Activated CD4-positive, alpha-beta memory T cell treated with anti-CD3 and anti-CD28 coated beads, Interleukin-2, amount 10 ng/mL, durations not matched to agents 7 days and 5 days (primary cell): ENCODE measurements at regions of chr10 and their contacts with region 1.

Region 1: DNA sequence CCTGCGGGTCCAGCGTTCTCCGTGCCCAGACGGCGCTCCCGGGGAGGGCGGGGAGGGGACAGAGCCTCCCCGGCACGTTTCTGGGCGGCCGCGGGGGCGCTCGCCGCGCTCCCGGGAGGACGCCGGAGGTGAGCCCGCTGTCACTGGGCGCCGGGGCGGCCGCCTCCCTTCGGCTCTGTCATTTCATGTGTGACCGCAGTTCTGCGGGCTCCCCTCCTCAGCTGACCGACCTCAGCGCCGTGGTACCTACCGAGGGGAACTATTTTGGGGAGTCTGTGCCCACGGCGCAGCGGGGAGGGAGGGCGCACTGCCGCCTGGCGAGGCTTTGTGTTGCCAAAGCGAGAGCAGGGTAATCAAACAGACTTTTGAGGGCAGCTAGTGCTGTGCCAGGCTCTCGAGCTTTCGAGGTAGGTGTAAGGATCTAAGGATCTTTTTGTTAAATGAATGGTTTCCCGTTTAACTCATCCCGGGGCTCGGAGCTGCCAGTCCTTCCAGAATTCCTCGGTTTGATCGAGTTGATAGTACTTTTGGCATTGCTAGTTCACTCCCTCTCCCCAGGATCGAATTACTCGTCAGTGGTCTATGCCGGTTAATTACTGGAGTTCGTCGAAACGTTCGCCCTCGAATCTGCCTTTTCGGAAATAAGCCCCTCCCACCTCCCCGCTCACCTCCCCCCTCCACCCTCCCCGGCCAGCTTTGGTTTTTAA is 1.9 kb downstream of the ARID5B start:
- DNase-seq: peak; percentile 82
- H3K4me3 Mint-ChIP-seq: peak overlapping the region; percentile 94
- H3K27ac Mint-ChIP-seq: peak overlapping the region; percentile 98
- H3K4me1 Mint-ChIP-seq: peaks cover 37% of the 10 kb centered on the region
- H3K27me3 Mint-ChIP-seq: no peaks in the 10 kb centered on the region

Region 2: GRCh38 chr10:61937631-61938351 is 34.4 kb after region 1 on chr10:
- CTCF ChIA-PET with region 1: interaction called, 17 read pairs
- POLR2A ChIA-PET with region 1: interaction called, 382 read pairs
- DNase-seq: no peak
- H3K4me3 Mint-ChIP-seq: peak overlapping the region; percentile 37
- H3K27ac Mint-ChIP-seq: peak overlapping the region; percentile 64
- H3K4me1 Mint-ChIP-seq: peaks cover 86% of the 10 kb centered on the region
- H3K27me3 Mint-ChIP-seq: no peaks in the 10 kb centered on the region

Region 3: DNA sequence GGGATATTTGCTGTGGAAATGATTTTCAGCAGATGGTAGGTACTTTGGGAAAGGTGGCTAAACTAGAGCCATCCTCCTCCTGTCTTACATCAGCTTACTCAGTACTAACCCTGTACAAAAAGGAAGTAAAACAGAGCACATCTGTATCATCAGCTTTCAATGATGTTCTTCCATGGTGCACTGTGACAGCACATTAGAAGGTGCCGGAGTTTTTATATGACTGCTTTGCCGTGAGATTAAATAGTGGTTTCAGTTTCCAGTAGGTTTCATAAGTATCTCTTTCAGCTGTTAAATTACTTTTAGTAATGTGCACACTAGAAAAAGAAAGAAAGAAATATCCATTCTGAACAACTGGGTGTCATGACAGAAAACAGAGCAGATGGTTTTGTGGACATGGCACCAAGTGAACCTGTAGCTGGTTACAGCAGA is 84.6 kb after region 1 on chr10:
- CTCF ChIA-PET with region 1: interaction called, 32 read pairs
- POLR2A ChIA-PET with region 1: interaction called, 355 read pairs
- DNase-seq: peak; percentile 30
- H3K4me3 Mint-ChIP-seq: peak overlapping the region; percentile 66
- H3K27ac Mint-ChIP-seq: peak overlapping the region; percentile 98
- H3K4me1 Mint-ChIP-seq: peaks cover 82% of the 10 kb centered on the region
- H3K27me3 Mint-ChIP-seq: no peaks in the 10 kb centered on the region

Region 4: DNA sequence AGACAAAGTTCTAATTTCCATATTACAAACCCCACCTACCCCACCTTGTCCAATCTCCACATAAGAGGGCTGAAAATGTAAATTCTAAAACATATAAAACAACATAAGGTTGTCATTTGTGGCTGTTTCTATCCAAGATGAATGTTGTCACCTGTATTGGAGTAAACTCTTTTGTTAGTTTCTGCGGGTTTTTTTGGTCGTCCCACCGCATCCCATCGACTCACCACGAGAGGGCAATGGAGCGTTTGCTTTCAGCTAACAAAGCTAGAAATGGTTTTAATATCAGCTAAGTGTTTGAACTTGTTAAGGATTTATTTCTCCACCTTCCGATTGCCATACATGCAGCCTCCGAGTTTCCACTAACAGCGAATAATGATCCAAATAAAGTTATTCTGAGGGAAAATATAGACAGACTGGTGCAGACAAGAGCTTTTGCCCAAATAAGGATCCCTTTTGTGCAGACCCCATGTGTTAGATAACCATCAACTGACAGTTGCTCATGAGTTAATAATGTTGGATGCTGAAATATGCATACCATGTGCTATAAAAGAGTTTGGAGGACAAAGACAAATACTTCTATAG is 135.3 kb after region 1 on chr10:
- CTCF ChIA-PET with region 1: interaction called, 15 read pairs
- POLR2A ChIA-PET with region 1: interaction called, 131 read pairs
- DNase-seq: peak; percentile 83
- H3K4me3 Mint-ChIP-seq: peak overlapping the region; percentile 54
- H3K27ac Mint-ChIP-seq: peak overlapping the region; percentile 74
- H3K4me1 Mint-ChIP-seq: peaks cover 72% of the 10 kb centered on the region
- H3K27me3 Mint-ChIP-seq: no peaks in the 10 kb centered on the region

Region 5: GRCh38 chr10:62183442-62183841 is 280.1 kb after region 1 on chr10:
- CTCF ChIA-PET with region 1: interaction called, 3 read pairs
- POLR2A ChIA-PET with region 1: interaction called, 121 read pairs
- DNase-seq: peak; percentile 49
- H3K4me3 Mint-ChIP-seq: peak overlapping the region; percentile 9
- H3K27ac Mint-ChIP-seq: peak overlapping the region; percentile 91
- H3K4me1 Mint-ChIP-seq: peaks cover 84% of the 10 kb centered on the region
- H3K27me3 Mint-ChIP-seq: no peaks in the 10 kb centered on the region